ENCODE measurements at regions of chr4 and their contacts with region 1.

Region 1: DNA sequence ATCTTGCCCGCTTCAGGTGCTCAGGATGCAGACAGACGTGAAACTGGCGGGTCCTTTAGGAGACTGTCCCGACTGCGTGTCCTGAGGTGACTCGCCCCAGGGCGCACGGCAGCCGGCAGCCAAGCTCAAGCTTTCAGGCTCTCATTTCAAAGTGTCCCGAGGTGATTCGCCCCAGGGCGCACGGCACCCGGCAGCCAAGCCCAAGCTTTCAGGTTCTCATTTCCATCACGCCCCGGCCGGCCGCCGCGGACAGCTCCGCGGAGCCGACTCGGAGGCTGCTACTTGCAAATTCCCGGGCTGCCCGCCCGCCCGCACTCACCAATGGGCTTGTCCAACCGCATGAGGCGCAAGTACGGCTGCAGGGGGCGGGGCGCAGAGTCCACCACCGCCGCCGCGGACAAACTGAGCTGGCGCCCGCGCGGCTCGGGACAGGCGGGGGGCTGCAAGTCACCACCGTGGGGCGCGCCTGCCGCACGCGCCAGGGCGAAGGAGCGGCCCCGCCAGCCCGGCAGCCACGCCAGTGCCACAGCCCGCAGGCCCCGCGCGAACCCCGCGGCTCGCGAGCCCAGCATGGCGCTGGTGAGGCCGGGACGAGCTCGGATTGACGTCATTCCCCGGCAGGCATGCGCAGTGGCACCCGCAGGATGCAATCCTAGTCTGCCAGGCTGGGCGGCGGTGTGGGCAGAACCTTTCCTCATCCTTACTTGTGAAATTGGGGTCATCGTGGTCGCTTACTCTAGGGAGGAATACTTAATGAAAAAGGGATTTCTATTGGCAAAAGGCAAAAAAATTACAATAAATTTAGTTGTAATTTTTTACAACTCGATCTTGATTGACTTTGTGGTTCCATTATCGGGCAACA is at the start of gene COQ2:
- DNase-seq: peak; percentile 97 to 99
- ATAC-seq: peak; percentile 97
- H3K4me3 ChIP-seq: peak within 1 kb of the TSS; percentile 50 to 70
- H3K27ac ChIP-seq: peak within 1 kb of the TSS; percentile 32 to 72
- H3K4me1 ChIP-seq: peaks cover 0 to 2% of the 10 kb centered on the region in 2 donors
- H3K27me3 ChIP-seq: no peaks in the 10 kb centered on the region
- total RNA-seq, gene COQ2: 6.6 to 7.6 TPM

Region 2: GRCh38 chr4:83074086-83074704 is 210.2 kb before region 1 on chr4:
- intact Hi-C with region 1: loop called (anchors 5 kb)
- DNase-seq: no peak
- ATAC-seq: no peak
- H3K4me3 ChIP-seq: no peak overlapping the region
- H3K27ac ChIP-seq: no peak overlapping the region
- H3K4me1 ChIP-seq: no peaks in the 10 kb centered on the region
- H3K27me3 ChIP-seq: no peaks in the 10 kb centered on the region

Region 3: GRCh38 chr4:83405844-83406816 is 121.7 kb after region 1 on chr4:
- intact Hi-C with region 1: no loop called
- DNase-seq: no peak
- ATAC-seq: no peak
- H3K4me3 ChIP-seq: no peak overlapping the region
- H3K27ac ChIP-seq: no peak overlapping the region
- H3K4me1 ChIP-seq: no peaks in the 10 kb centered on the region
- H3K27me3 ChIP-seq: no peaks in the 10 kb centered on the region

Region 4: GRCh38 chr4:83455281-83456129 is 171.1 kb after region 1 on chr4 and contains the starts of genes HELQ and MRPS18C:
- intact Hi-C with region 1: loop called (anchors 5 to 10 kb)
- DNase-seq: peak; percentile 96 to 98
- ATAC-seq: peak; percentile 98
- H3K4me3 ChIP-seq: peak within 1 kb of the TSS; percentile 93 to 96
- H3K27ac ChIP-seq: peak within 1 kb of the TSS; percentile 71 to 95
- H3K4me1 ChIP-seq: peaks cover 4 to 5% of the 10 kb centered on the region in 2 donors
- H3K27me3 ChIP-seq: no peaks in the 10 kb centered on the region
- total RNA-seq, gene HELQ: 11.6 to 17.0 TPM
- total RNA-seq, gene MRPS18C: 38.2 to 41.5 TPM

Measured in aorta (tissue), 5 donors.